Activated B cell treated with CpG ODN at 0.5 μM for 24 hours (primary cell): ENCODE measurements at regions of chr2 and their contacts with region 1.

Region 1: GRCh38 chr2:224650815-224651439 is 65.2 kb downstream of the CCDC195 start:
- DNase-seq: no peak
- ATAC-seq: peak; percentile 64
- H3K4me3 Mint-ChIP-seq: no peak overlapping the region
- H3K27ac Mint-ChIP-seq: no peak overlapping the region
- H3K4me1 Mint-ChIP-seq: peaks cover 12% of the 10 kb centered on the region
- H3K27me3 Mint-ChIP-seq: no peaks in the 10 kb centered on the region
- CTCF ChIP-seq: peak; percentile 77

Region 2: GRCh38 chr2:223993621-223994232 is 657.2 kb before region 1 on chr2:
- CTCF ChIA-PET with region 1: interaction called, 5 read pairs
- POLR2A ChIA-PET with region 1: no interaction called
- intact Hi-C with region 1: loop called (anchors 1 kb)
- DNase-seq: no peak
- ATAC-seq: peak; percentile 67
- H3K4me3 Mint-ChIP-seq: no peak overlapping the region
- H3K27ac Mint-ChIP-seq: no peak overlapping the region
- H3K4me1 Mint-ChIP-seq: no peaks in the 10 kb centered on the region
- H3K27me3 Mint-ChIP-seq: no peaks in the 10 kb centered on the region
- CTCF ChIP-seq: no peak

Region 3: DNA sequence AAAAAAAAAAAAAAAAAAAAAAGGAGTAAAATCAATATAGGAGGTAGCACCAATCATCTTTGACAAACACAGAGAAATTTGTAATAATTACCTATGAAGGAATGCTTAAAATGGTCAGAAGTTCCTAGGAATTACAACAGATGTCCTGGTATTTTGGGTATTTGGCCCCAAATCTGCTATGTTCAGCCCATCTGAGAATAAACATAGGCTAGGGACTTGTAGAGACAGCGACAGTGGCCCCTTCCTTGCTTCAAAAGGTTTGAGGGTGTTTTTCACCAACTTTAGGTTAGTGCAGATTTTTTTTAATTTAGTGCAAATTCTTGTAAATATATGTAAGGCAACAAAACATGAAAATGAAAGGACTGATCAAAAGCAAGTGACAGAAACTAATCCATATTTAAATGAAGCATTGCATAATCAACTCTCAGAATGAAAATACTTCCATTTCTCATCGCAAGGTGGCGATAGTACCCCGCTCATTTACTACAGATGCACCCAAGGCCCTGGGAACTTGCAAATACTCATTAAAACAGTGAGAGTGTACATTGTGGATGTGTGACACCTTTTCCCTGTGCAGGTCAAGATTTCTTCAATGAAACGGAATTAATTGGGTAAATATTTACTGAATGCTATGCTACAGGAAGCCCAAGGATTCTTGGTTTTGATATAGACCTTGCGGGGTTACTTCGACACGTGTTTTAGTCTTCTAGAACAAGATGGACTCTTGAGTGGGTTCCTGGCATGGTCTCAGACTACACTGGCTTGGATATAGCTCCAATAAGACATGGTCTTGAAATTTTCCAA is 293.6 kb before region 1 on chr2:
- CTCF ChIA-PET with region 1: interaction called, 42 read pairs
- POLR2A ChIA-PET with region 1: no interaction called
- intact Hi-C with region 1: loop called (anchors 1 kb)
- DNase-seq: no peak
- ATAC-seq: peak; percentile 73
- H3K4me3 Mint-ChIP-seq: no peak overlapping the region
- H3K27ac Mint-ChIP-seq: no peak overlapping the region
- H3K4me1 Mint-ChIP-seq: no peaks in the 10 kb centered on the region
- H3K27me3 Mint-ChIP-seq: peaks cover 8% of the 10 kb centered on the region
- CTCF ChIP-seq: no peak

Region 4: DNA sequence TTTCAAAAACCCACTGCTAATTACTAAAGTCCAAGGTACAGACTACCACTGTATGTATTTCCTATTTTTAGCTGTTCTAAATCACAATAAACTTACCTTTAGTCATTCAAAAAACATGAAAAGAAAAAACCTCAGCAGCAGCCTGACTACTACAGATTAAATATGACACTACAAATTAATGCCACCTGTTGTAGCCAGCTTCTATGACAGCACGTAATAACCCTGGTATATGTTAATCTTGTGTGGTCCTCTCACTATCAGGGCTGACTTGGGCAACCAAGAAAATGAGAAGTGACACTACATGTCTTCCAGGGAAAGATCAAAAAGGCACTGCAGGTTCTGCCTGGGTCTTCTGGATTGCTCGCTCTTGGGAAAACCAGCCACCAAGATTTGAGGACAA is 158.4 kb before region 1 on chr2:
- CTCF ChIA-PET with region 1: interaction called, 3 read pairs
- POLR2A ChIA-PET with region 1: no interaction called
- intact Hi-C with region 1: loop called (anchors 5 kb)
- DNase-seq: no peak
- ATAC-seq: no peak
- H3K4me3 Mint-ChIP-seq: no peak overlapping the region
- H3K27ac Mint-ChIP-seq: peak overlapping the region; percentile 46
- H3K4me1 Mint-ChIP-seq: peaks cover 45% of the 10 kb centered on the region
- H3K27me3 Mint-ChIP-seq: no peaks in the 10 kb centered on the region
- CTCF ChIP-seq: no peak

Region 5: DNA sequence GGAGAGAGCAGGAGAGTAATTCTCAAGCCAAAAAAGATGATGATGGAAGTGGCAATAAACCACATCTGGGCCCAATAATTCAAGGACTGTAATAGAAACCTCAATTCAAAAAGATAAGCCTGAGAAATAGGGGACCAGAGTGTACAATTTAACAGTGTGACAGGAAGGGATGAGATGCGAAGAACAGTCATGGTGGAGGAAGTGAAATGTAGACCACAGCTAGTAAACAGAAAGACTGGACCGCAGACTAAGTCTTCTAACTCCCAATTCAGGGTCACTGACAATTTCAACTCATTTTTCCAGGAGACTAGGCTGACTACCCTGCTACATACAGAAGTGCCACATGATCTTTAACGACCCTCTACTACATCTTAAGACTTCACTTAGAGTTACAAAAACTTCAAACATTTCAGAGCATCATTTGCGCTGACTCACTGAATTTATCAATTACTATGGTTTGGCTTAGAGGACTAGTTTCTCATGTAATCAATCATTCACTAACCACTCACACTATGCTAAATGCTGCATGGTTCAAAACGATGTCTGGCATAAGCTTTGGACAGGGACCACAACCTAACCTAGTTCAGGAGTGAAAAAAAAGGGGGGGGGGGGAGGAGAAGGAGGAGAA is 74.7 kb before region 1 on chr2:
- CTCF ChIA-PET with region 1: no interaction called
- POLR2A ChIA-PET with region 1: no interaction called
- intact Hi-C with region 1: no loop called
- DNase-seq: no peak
- ATAC-seq: peak; percentile 51
- H3K4me3 Mint-ChIP-seq: peak overlapping the region; percentile 52
- H3K27ac Mint-ChIP-seq: peak overlapping the region; percentile 9
- H3K4me1 Mint-ChIP-seq: peaks cover 93% of the 10 kb centered on the region
- H3K27me3 Mint-ChIP-seq: no peaks in the 10 kb centered on the region
- CTCF ChIP-seq: no peak

Region 6: GRCh38 chr2:224611938-224612337 is 39.0 kb before region 1 on chr2:
- CTCF ChIA-PET with region 1: interaction called, 4 read pairs
- POLR2A ChIA-PET with region 1: no interaction called
- intact Hi-C with region 1: loop called (anchors 5 kb)
- DNase-seq: no peak
- ATAC-seq: peak; percentile 42
- H3K4me3 Mint-ChIP-seq: no peak overlapping the region
- H3K27ac Mint-ChIP-seq: no peak overlapping the region
- H3K4me1 Mint-ChIP-seq: no peaks in the 10 kb centered on the region
- H3K27me3 Mint-ChIP-seq: no peaks in the 10 kb centered on the region
- CTCF ChIP-seq: no peak

Region 7: DNA sequence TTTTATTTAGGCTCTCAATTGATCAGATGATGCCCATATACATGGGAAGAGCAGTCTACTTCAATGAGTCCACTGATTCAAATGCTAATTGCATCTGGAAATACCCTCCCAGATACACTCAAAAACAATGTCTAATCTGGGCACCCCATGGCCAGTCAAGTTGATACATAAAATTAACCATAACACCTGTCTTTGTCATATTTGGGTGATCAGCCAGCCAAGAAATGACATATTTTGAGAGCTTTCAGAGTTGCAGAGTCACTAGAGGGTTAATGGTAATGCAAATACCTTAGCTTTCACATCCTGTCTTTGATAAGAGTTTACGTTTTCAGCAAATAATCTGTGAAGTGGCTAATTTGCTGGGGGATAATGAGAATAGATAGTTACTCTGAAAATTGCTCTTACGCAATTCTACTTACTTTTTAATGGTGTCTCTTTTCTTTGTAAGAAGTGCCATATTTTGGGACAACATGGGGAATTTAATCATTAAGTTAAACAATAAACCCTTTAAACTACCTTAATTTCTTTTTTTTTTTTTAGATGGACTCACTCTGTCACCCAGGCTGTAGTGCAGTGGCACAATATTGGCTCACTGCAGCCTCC is 16.1 kb after region 1 on chr2:
- CTCF ChIA-PET with region 1: interaction called, 15 read pairs
- POLR2A ChIA-PET with region 1: no interaction called
- intact Hi-C with region 1: no loop called
- DNase-seq: no peak
- ATAC-seq: peak; percentile 85
- H3K4me3 Mint-ChIP-seq: peak overlapping the region; percentile 56
- H3K27ac Mint-ChIP-seq: peak overlapping the region; percentile 68
- H3K4me1 Mint-ChIP-seq: peaks cover 19% of the 10 kb centered on the region
- H3K27me3 Mint-ChIP-seq: no peaks in the 10 kb centered on the region
- CTCF ChIP-seq: no peak

Region 8: DNA sequence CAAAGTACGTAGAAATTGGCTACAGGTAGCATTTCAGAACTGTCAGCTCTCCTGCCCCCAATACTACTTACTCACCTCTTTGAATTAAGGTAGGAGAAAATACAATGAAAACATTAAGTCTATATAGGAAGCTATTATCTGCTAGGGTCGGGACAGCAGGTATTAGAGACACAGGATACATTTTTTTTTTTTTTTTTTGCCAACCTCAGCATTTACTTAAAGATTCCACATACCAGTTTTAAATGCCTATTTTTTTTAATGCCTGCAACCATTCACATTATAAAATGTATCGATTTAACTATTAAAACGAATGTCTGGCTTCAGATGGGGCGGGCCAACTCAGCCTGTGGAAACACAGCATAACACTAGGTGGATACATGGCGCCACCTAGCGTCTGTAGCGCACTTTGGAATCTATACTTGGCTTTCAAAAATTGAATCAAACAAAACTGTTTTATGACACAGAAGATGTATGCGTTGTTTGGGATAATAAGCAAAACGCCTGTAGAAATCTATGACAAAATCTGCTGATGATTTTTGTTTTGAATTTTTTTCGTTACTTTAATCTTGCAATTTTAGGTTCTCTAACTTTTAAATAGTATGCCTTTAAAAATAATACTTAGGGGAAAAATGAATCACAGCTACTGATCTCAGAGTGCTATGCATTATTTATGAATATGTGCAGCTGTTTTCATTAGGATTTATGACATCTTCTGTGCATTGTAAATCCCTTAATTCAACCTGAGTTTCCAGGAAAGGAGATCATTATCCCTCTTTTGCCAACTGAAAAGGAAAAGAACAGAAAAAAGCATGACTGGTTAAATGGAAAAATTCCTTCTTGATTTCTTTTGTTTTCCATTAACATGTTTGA is 1009.6 kb after region 1 on chr2:
- CTCF ChIA-PET with region 1: no interaction called
- POLR2A ChIA-PET with region 1: no interaction called
- intact Hi-C with region 1: loop called (anchors 5 kb)
- DNase-seq: peak; percentile 52
- ATAC-seq: peak; percentile 65
- H3K4me3 Mint-ChIP-seq: no peak overlapping the region
- H3K27ac Mint-ChIP-seq: no peak overlapping the region
- H3K4me1 Mint-ChIP-seq: peaks cover 2% of the 10 kb centered on the region
- H3K27me3 Mint-ChIP-seq: peaks cover 22% of the 10 kb centered on the region
- CTCF ChIP-seq: peak; percentile 91